ENCODE measurements at regions of chr10 and their contacts with region 1.

Region 1: DNA sequence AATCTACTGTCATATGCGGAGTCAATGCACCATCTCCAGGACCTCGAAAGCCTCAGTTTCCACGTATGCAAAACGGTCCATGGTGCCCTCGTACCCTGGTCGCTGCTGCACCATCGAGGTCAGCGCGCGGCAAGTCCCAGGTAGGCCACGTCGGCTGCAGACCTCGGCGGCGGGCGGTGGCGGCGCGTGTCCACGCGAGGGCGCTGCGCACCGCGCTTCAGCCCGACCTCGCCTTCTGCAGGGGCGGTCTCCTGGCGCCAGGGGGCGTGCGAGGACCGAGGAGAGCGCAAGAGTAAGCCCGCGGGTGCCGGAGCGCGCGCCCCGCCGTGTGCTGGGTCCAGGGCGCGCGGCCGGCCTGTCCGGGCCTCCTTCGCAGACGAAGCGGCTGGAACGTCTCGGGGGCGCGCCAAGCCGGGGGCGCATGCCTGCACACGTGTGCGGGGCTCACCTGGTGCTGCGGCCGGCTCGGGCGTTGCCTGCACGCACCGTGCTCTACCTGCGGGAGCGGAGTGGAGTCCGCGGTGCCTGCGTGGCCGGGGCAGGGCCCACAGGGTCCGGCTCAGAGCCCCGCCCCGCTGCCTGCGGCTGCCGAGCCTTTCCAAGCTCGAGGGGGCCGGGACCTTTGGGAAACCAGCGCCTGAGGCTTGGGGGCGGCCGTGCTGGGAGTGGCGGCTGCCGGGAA is 54.0 kb downstream of the GLRX3 start:
- DNase-seq: peak; percentile 83
- H3K4me3 Mint-ChIP-seq: no peak overlapping the region
- H3K27ac Mint-ChIP-seq: no peak overlapping the region
- H3K4me1 Mint-ChIP-seq: no peaks in the 10 kb centered on the region
- H3K27me3 Mint-ChIP-seq: peaks cover 9% of the 10 kb centered on the region

Region 2: DNA sequence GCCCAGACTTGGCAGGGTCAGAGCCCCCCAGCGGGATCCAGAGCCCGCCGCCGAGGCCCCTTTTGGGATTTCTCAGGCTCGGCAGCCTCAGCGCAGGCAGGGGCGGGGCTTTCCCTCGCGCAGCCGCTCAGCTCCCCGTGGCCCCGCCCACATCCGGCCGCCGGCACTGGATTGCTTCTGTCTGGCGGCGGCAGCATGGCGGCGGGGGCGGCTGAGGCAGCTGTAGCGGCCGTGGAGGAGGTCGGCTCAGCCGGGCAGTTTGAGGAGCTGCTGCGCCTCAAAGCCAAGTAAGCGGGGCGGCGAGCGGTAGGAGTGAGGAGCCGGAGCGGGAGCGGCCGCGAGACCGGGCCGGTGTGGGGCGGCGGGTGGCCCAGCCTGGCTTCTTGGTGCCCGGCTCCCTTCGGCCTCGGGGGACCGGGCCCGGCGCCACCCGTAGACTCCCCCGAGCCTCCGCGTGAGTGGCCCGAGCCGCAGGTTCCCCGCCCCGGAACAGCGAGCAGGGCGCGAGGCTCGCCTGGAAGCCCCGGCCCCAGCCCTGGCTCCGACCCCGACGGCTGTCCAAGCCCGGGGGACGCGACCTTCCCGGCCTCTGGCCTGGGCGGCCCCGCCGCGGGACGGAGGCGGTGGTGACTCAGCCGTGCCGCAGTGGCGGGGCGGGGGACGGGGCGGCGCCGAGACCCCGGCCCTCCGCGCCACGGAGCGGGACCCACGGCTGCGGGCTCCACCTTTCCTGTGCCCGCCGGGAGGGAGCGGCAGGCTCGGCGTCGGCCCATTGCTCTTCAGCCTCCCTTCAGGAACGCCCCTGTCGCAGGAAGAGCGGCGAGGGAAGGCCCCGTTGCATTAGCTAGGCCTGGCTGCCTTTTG is 53.7 kb before region 1 on chr10 and contains the start of gene GLRX3:
- intact Hi-C with region 1: loop called (anchors 2 kb)
- DNase-seq: peak; percentile 85
- H3K4me3 Mint-ChIP-seq: peak within 1 kb of the TSS; percentile 90
- H3K27ac Mint-ChIP-seq: peak within 1 kb of the TSS; percentile 84
- H3K4me1 Mint-ChIP-seq: peaks cover 53% of the 10 kb centered on the region
- H3K27me3 Mint-ChIP-seq: peaks cover 13% of the 10 kb centered on the region
- total RNA-seq, gene GLRX3: 119 and 129 TPM in 2 replicates

Region 3: GRCh38 chr10:130333185-130333584 is 143.0 kb after region 1 on chr10:
- intact Hi-C with region 1: loop called (anchors 2 kb)
- DNase-seq: no peak
- H3K4me3 Mint-ChIP-seq: no peak overlapping the region
- H3K27ac Mint-ChIP-seq: no peak overlapping the region
- H3K4me1 Mint-ChIP-seq: no peaks in the 10 kb centered on the region
- H3K27me3 Mint-ChIP-seq: no peaks in the 10 kb centered on the region

Measured in activated T-helper 1 cell treated with anti-CD3 and anti-CD28 coated beads, Interleukin-12 subunit alpha, Interleukin-12 subunit beta, Interleukin-2, Interleukin-4 antibody, amounts not matched to agents 30 ng/mL and 10 ng/mL and 1 ng/mL, durations not matched to agents 14 hours and 24 hours and 36 hours (primary cell).